CD8-positive, alpha-beta T cell (primary cell): ENCODE measurements at regions of chr17 and their contacts with region 1.

Region 1: DNA sequence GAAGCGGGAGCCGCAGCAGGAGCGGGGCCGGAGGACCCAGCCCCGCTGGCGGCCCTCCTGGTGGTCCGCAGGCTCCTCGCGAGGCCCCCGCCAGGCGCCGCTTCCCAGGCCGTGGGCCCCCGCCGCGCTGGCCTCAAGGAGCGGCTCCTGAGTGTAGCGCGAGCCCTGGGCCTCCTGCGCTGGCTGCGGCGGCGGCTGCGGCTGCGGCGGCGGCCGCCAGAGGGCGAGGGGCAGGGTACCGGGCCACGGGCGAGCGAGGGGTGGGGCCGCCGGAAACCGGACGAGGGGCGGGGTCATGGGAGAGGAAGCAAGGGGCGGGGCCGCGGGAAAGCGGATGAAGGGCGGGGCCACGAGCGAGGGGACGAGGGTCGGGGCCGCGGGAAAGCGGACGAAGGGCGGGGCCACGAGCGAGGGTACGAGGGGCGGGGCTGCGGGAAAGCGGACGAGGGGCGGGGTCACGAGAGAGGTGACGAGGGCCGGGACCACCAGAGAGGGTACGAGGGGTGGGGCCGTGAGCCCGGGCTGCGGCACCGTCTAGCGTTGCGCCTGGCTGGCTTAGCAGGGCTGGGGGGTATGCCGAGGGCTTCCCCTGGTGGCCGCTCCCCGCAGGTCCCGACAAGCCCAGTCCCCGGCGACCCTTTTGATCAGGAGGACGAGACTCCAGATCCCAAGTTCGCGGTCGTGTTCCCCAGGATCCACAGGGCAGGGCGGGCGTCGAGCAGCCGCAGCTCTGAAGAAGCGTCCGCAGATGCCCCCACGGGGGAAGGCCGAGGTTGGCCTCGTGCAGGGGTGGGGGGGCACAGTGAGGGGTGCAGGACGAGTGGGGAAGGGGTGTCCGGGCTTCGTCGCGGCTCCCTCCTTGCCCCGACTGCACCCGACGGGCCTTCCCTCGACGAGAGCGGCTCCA is 1.7 kb downstream of the MYO15B start:
- DNase-seq: peak; percentile 90 to 99 (median 95)
- ATAC-seq: peak; percentile 85
- H3K4me3 ChIP-seq: peak overlapping the region; percentile 59 to 74
- H3K4me3 Mint-ChIP-seq: peak overlapping the region; percentile 77
- H3K27ac ChIP-seq: peak overlapping the region; percentile 48 to 52
- H3K27ac Mint-ChIP-seq: peak overlapping the region; percentile 70
- H3K4me1 ChIP-seq: peaks cover 15% of the 10 kb centered on the region
- H3K4me1 Mint-ChIP-seq: peaks cover 15% of the 10 kb centered on the region
- H3K27me3 ChIP-seq: no peaks in the 10 kb centered on the region
- H3K27me3 Mint-ChIP-seq: no peaks in the 10 kb centered on the region
- CTCF ChIP-seq: peak; percentile 61

Region 2: GRCh38 chr17:75430159-75430974 is 158.9 kb before region 1 on chr17:
- CTCF ChIA-PET with region 1: interaction called, 6 read pairs
- POLR2A ChIA-PET with region 1: no interaction called
- intact Hi-C with region 1: loop called (anchors 1 kb)
- DNase-seq: no peak
- ATAC-seq: no peak
- H3K4me3 ChIP-seq: no peak overlapping the region
- H3K4me3 Mint-ChIP-seq: no peak overlapping the region
- H3K27ac ChIP-seq: no peak overlapping the region
- H3K27ac Mint-ChIP-seq: no peak overlapping the region
- H3K4me1 ChIP-seq: peaks cover 6% of the 10 kb centered on the region
- H3K4me1 Mint-ChIP-seq: peaks cover 11% of the 10 kb centered on the region
- H3K27me3 ChIP-seq: no peaks in the 10 kb centered on the region
- H3K27me3 Mint-ChIP-seq: peaks cover 5% of the 10 kb centered on the region
- CTCF ChIP-seq: no peak

Region 3: DNA sequence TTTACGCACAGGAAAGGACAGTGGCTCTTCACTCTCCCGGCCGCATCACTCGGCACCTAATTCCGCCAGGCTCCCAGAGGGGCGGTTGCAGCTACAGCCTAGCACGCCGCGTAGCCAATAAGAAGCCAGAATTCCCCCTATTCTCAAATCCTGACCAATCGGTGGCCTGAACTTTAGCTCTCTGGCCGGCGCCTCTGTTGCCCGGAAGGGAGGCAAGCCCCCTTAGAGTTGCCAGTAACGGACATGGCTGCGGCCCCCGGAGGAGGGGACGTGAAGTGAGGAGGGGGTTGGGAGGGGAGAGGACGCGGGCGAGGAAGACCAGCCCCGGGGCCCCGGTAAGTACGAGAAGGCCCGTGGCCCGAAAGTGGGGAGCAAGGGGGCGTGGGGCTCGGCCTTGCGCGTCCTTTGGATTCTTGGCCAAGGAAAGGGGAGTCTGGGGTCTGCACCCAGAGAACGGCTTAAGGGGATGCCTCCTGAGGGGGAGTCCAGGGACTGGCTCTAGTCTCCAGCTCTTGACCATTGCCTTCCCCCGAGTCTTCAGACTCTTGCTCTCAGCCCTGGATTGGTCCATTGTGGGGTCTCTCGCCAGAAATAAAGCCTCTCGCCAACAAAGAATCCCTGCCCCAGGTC is 132.7 kb before region 1 on chr17 and contains the start of gene TMEM94:
- CTCF ChIA-PET with region 1: interaction called, 3 read pairs
- POLR2A ChIA-PET with region 1: interaction called, 3 read pairs
- intact Hi-C with region 1: loop called in 1 of 2 experiments (anchors 1 kb)
- DNase-seq: peak; percentile 80 to 98 (median 91)
- ATAC-seq: peak; percentile 97
- H3K4me3 ChIP-seq: peak within 1 kb of the TSS; percentile 100
- H3K4me3 Mint-ChIP-seq: peak within 1 kb of the TSS; percentile 96
- H3K27ac ChIP-seq: peak within 1 kb of the TSS; percentile 75 to 82
- H3K27ac Mint-ChIP-seq: peak within 1 kb of the TSS; percentile 92
- H3K4me1 ChIP-seq: peaks cover 16% of the 10 kb centered on the region
- H3K4me1 Mint-ChIP-seq: peaks cover 36% of the 10 kb centered on the region
- H3K27me3 ChIP-seq: no peaks in the 10 kb centered on the region
- H3K27me3 Mint-ChIP-seq: peaks cover 3% of the 10 kb centered on the region
- CTCF ChIP-seq: no peak
- total RNA-seq, gene TMEM94: 44.8 to 46.5 TPM

Region 4: GRCh38 chr17:75504347-75504964 is 84.8 kb before region 1 on chr17:
- CTCF ChIA-PET with region 1: interaction called, 3 read pairs
- POLR2A ChIA-PET with region 1: no interaction called
- intact Hi-C with region 1: loop called in 1 of 2 experiments (anchors 5 kb)
- DNase-seq: peak in 6 of 9 experiments; percentile 48 to 70 (median 58)
- ATAC-seq: peak; percentile 71
- H3K4me3 ChIP-seq: no peak overlapping the region
- H3K4me3 Mint-ChIP-seq: no peak overlapping the region
- H3K27ac ChIP-seq: no peak overlapping the region
- H3K27ac Mint-ChIP-seq: no peak overlapping the region
- H3K4me1 ChIP-seq: peaks cover 6% of the 10 kb centered on the region
- H3K4me1 Mint-ChIP-seq: no peaks in the 10 kb centered on the region
- H3K27me3 ChIP-seq: no peaks in the 10 kb centered on the region
- H3K27me3 Mint-ChIP-seq: no peaks in the 10 kb centered on the region
- CTCF ChIP-seq: peak; percentile 50

Region 5: GRCh38 chr17:75524953-75525719 is 64.1 kb before region 1 on chr17 and contains the start of gene LLGL2:
- CTCF ChIA-PET with region 1: interaction called, 5 read pairs
- POLR2A ChIA-PET with region 1: no interaction called
- intact Hi-C with region 1: loop called (anchors 2 kb)
- DNase-seq: peak; percentile 74 to 94 (median 85)
- ATAC-seq: peak; percentile 94
- H3K4me3 ChIP-seq: peak within 1 kb of the TSS; percentile 70 to 78
- H3K4me3 Mint-ChIP-seq: peak within 1 kb of the TSS; percentile 82
- H3K27ac ChIP-seq: peak within 1 kb of the TSS; percentile 21 to 47
- H3K27ac Mint-ChIP-seq: no peak within 1 kb of the TSS
- H3K4me1 ChIP-seq: peaks cover 22% of the 10 kb centered on the region
- H3K4me1 Mint-ChIP-seq: peaks cover 13% of the 10 kb centered on the region
- H3K27me3 ChIP-seq: no peaks in the 10 kb centered on the region
- H3K27me3 Mint-ChIP-seq: no peaks in the 10 kb centered on the region
- CTCF ChIP-seq: no peak
- total RNA-seq, gene LLGL2: 32.7 to 36.4 TPM

Region 6: DNA sequence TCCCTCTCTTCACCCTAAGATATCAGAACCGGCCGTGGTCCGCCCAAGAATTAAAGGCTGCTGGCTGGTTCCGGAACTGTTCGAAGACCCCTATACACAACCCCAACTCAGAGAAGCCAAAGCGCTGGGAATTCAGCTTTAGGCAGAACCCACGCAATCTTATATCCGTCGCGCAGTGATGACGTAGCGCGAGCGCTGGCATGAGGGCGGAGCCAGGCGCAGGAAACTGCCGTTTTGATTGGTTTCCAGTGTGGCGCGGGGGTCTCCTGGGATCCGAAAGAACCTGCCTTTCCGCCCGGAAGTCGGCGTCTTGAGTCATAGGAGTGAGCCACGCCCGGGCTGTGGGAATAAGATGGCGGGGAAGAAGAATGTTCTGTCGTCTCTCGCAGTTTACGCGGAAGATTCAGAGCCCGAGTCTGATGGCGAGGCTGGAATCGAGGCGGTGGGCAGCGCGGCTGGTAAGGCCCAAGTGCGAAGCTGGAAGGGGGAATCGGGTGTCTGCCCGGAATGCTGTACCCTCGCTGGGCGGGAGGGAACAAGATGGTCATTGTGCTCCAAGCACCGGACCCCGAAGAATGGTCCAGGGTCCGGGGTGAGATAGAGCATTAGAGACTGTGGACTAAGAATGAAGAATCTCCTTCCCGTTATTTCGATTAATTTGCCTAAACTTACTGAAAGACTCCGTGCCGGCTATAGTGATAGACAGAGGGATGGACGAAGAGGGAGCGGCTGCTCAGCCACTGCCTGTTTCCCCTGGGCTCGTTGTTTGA is 77.9 kb after region 1 on chr17 and contains the starts of genes RECQL5 and SAP30BP:
- CTCF ChIA-PET with region 1: interaction called, 3 read pairs
- POLR2A ChIA-PET with region 1: no interaction called
- intact Hi-C with region 1: loop called in 1 of 2 experiments (anchors 2 kb)
- DNase-seq: peak; percentile 95 to 99 (median 98)
- ATAC-seq: peak; percentile 100
- H3K4me3 ChIP-seq: peak within 1 kb of the TSS; percentile 78 to 85
- H3K4me3 Mint-ChIP-seq: peak within 1 kb of the TSS; percentile 58
- H3K27ac ChIP-seq: peak within 1 kb of the TSS; percentile 88 to 96
- H3K27ac Mint-ChIP-seq: no peak within 1 kb of the TSS
- H3K4me1 ChIP-seq: peaks cover 18% of the 10 kb centered on the region
- H3K4me1 Mint-ChIP-seq: peaks cover 33% of the 10 kb centered on the region
- H3K27me3 ChIP-seq: no peaks in the 10 kb centered on the region
- H3K27me3 Mint-ChIP-seq: no peaks in the 10 kb centered on the region
- CTCF ChIP-seq: no peak
- total RNA-seq, gene RECQL5: 11.2 to 13.2 TPM
- total RNA-seq, gene SAP30BP: 303 to 305 TPM